Transverse colon (tissue), 4 donors: ENCODE measurements at regions of chr15 and their contacts with region 1.

Region 1: DNA sequence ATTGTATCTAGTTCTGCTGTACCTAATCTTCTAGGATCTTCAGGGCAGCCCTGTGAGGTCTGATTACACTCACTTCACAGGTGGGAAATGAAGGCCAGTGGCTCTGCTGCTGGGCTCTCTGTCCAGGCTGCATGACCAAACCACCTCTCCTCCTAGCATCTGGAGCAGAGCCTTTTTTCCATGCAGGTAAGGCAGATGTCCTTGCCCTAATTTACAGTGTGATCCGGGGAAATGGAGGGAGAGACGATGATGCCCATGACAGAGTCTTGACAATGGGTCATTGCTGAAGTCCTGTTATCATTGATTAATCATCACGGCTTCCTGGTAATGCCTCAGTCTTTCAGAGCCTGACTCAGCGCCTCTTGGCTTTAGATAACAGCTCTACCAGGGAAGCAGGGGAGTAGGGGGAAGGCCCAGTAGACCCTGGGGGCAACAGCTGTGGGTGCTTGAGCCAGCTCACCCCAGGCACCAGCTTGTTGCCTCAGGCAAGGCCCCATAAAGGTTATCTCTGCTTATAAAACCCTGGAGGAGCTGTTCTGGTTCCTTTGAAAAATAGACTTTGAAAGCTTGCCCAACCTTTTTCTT is 153.4 kb downstream of the GABRG3 start:
- DNase-seq: no peak
- H3K4me3 ChIP-seq: no peak overlapping the region
- H3K27ac ChIP-seq: no peak overlapping the region
- H3K4me1 ChIP-seq: no peaks in the 10 kb centered on the region
- H3K27me3 ChIP-seq: no peaks in the 10 kb centered on the region
- CTCF ChIP-seq: no peak
- EP300 ChIP-seq: no peak
- POLR2A ChIP-seq: no peak

Region 2: GRCh38 chr15:27382361-27383025 is 258.1 kb after region 1 on chr15:
- in situ Hi-C with region 1: loop called in 1 of 4 experiments (anchors 25 kb)
- intact Hi-C with region 1: no loop called
- DNase-seq: no peak
- H3K4me3 ChIP-seq: no peak overlapping the region
- H3K27ac ChIP-seq: no peak overlapping the region
- H3K4me1 ChIP-seq: no peaks in the 10 kb centered on the region
- H3K27me3 ChIP-seq: no peaks in the 10 kb centered on the region
- CTCF ChIP-seq: no peak
- EP300 ChIP-seq: no peak
- POLR2A ChIP-seq: no peak